IMR-90 (cell line): ENCODE measurements at regions of chr3 and their contacts with region 1.

Region 1: DNA sequence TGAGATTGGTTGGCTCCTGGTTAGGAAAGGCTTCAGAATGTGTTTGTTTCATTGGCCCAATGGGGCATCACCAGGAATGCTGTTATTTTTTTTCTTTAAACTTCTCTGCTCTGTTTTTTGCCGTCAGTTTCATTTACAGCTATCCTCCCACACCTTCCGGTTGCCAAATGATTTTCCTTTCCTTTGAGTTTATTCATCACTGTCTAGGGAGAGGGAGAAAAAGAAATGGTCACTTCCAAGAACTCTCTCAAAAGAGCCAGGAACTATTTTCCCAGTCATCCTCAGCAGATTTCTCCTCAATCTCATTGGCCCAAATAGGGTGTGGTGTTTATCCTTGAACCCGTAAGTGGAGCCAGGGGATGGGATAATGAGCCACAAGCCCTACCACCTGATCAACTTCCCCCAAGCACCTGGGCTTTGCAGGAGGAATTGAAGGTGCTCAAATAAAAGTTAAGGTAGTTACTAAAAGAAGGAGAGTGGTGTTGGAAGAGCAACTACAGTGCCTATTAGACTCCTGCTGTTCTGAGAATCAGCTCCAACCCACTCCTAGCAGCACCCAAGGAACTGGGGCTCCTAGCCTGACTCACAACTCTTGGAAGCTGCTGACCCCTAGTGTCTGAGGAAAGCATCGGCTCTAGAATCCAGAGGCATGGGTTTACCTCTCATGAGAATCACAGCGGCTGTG is 183.8 kb upstream of the IL12A start:
- DNase-seq: peak; percentile 92
- ATAC-seq: peak; percentile 93
- H3K4me3 ChIP-seq: no peak overlapping the region
- H3K27ac ChIP-seq: no peak overlapping the region
- H3K4me1 ChIP-seq: peaks cover 22% of the 10 kb centered on the region
- H3K27me3 ChIP-seq: no peaks in the 10 kb centered on the region
- CTCF ChIP-seq: peak; percentile 95
- POLR2A ChIP-seq: no peak
- RAD21 ChIP-seq: peak; percentile 98

Region 2: DNA sequence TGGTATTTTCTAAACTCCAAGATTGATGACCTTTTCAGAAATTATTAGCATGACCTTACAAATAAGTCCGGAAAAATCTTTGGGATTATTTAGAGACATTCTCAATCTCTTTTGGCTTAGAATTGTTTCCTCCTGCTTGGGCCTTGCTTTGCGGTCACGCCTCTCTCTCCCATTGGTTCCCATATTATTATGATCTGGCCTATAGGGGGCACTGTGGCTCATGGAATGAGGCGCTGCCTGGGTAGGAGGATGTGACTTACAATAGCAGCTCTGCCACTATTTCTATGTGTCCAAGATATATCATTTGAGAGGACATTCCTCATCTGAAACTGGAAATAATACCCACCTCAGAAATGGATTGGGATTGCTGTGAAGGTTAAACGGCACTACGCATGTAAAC is 538.1 kb before region 1 on chr3:
- CTCF ChIA-PET with region 1: interaction called, 4 read pairs
- POLR2A ChIA-PET with region 1: no interaction called
- dilution Hi-C with region 1: no loop called
- in situ Hi-C with region 1: loop called (anchors 5 kb)
- intact Hi-C with region 1: loop called (anchors 1 kb)
- DNase-seq: peak; percentile 6
- ATAC-seq: no peak
- H3K4me3 ChIP-seq: no peak overlapping the region
- H3K27ac ChIP-seq: no peak overlapping the region
- H3K4me1 ChIP-seq: no peaks in the 10 kb centered on the region
- H3K27me3 ChIP-seq: peaks cover 5% of the 10 kb centered on the region; the same call in 1 of the 2 replicates
- CTCF ChIP-seq: peak; percentile 43
- POLR2A ChIP-seq: no peak
- RAD21 ChIP-seq: peak; percentile 56

Region 3: DNA sequence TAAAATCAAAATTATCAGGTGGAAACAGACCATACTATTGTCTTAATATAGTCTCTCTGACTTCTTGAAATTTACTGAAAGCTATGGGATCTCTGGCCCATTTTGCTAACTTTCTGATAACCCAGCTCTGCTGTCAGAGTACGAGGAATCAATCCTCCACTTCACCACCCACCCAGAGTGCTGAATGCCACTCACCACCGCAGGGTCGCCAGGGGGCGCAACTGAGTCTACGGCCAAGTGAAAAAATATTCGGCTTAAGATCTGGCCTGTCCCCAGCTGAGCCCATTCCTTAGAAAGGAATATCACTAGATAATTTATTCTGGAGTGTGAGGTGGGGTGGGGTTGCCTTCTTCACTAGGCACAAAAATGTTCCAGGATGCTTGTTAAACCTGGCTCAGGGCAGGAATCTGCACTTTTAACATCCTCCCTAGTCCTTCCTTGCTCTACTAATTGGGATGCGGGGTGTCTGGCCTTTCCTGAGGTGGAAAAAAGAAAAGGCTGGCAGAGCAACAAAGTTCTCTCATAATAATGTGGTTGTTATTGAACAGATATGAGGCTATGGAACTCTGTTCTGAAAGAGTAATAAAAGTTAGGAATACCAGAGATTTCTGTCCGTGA is 482.4 kb before region 1 on chr3:
- CTCF ChIA-PET with region 1: interaction called, 8 read pairs
- POLR2A ChIA-PET with region 1: no interaction called
- dilution Hi-C with region 1: no loop called
- in situ Hi-C with region 1: loop called (anchors 10 kb)
- intact Hi-C with region 1: no loop called
- DNase-seq: peak; percentile 20
- ATAC-seq: peak; percentile 77
- H3K4me3 ChIP-seq: no peak overlapping the region
- H3K27ac ChIP-seq: no peak overlapping the region
- H3K4me1 ChIP-seq: no peaks in the 10 kb centered on the region
- H3K27me3 ChIP-seq: no peaks in the 10 kb centered on the region
- CTCF ChIP-seq: peak; percentile 72
- POLR2A ChIP-seq: no peak
- RAD21 ChIP-seq: peak; percentile 59

Region 4: DNA sequence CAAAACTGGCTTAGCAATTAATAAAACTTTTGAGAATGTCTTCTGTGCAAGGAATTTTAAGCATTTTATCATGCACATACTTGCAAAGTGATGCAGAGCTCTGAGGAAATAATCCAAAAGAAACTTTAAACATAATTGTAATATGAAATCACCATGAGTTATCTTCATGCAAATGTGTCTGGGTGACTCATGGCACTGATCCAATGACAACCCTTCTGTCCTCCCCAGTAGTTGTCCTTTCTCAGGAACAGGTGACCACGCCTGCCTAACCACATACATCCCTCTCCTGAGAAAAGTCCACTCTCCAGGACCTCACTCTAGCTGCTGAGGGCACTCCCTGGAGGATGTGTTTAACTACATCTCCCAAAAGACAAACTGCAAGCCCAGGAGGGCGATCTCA is 346.9 kb before region 1 on chr3:
- CTCF ChIA-PET with region 1: no interaction called
- POLR2A ChIA-PET with region 1: no interaction called
- dilution Hi-C with region 1: no loop called
- in situ Hi-C with region 1: no loop called
- intact Hi-C with region 1: loop called (anchors 10 kb)
- DNase-seq: peak; percentile 97
- ATAC-seq: peak; percentile 87
- H3K4me3 ChIP-seq: no peak overlapping the region
- H3K27ac ChIP-seq: 0 out of 2 replicates have a peak overlapping the region, but pooled peaks have one; percentile 3
- H3K4me1 ChIP-seq: peaks cover 5% of the 10 kb centered on the region
- H3K27me3 ChIP-seq: no peaks in the 10 kb centered on the region
- CTCF ChIP-seq: no peak
- POLR2A ChIP-seq: no peak
- RAD21 ChIP-seq: no peak

Region 5: GRCh38 chr3:159586571-159587202 is 218.2 kb before region 1 on chr3:
- CTCF ChIA-PET with region 1: no interaction called
- POLR2A ChIA-PET with region 1: no interaction called
- dilution Hi-C with region 1: no loop called
- in situ Hi-C with region 1: no loop called
- intact Hi-C with region 1: loop called (anchors 1 kb)
- DNase-seq: peak; percentile 63
- ATAC-seq: peak; percentile 91
- H3K4me3 ChIP-seq: no peak overlapping the region
- H3K27ac ChIP-seq: no peak overlapping the region
- H3K4me1 ChIP-seq: peaks cover 2% of the 10 kb centered on the region; the same call in 1 of the 2 replicates
- H3K27me3 ChIP-seq: peaks cover 4% of the 10 kb centered on the region
- CTCF ChIP-seq: peak; percentile 63
- POLR2A ChIP-seq: no peak
- RAD21 ChIP-seq: peak; percentile 75

Region 6: GRCh38 chr3:159616212-159616825 is 188.5 kb before region 1 on chr3:
- CTCF ChIA-PET with region 1: interaction called, 6 read pairs
- POLR2A ChIA-PET with region 1: no interaction called
- dilution Hi-C with region 1: no loop called
- in situ Hi-C with region 1: loop called (anchors 5 kb)
- intact Hi-C with region 1: loop called (anchors 1 kb)
- DNase-seq: peak; percentile 68
- ATAC-seq: peak; percentile 70
- H3K4me3 ChIP-seq: no peak overlapping the region
- H3K27ac ChIP-seq: no peak overlapping the region
- H3K4me1 ChIP-seq: peaks cover 14% of the 10 kb centered on the region
- H3K27me3 ChIP-seq: no peaks in the 10 kb centered on the region
- CTCF ChIP-seq: peak; percentile 67
- POLR2A ChIP-seq: no peak
- RAD21 ChIP-seq: peak; percentile 82

Region 7: DNA sequence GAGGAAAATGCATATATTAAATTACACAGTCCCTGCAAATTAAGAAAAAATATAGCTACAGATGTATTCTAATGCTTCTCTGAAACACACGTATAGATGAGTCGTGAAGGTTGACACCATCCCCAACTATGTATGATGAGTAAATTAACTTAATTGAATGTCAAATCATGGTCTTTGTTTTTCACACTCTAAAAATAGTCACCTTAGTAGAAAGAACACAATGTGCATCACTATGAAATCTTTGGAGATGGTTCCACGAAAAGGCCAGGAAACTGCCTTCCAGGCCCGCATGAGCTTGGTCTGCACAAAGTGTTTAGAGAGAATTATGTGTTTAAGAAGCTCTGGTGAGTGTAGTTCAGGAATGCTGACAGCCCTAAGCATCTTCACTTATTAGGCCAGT is 129.6 kb before region 1 on chr3:
- CTCF ChIA-PET with region 1: no interaction called
- POLR2A ChIA-PET with region 1: no interaction called
- dilution Hi-C with region 1: no loop called
- in situ Hi-C with region 1: no loop called
- intact Hi-C with region 1: no loop called
- DNase-seq: no peak
- ATAC-seq: no peak
- H3K4me3 ChIP-seq: no peak overlapping the region
- H3K27ac ChIP-seq: no peak overlapping the region
- H3K4me1 ChIP-seq: no peaks in the 10 kb centered on the region
- H3K27me3 ChIP-seq: no peaks in the 10 kb centered on the region
- CTCF ChIP-seq: no peak
- POLR2A ChIP-seq: no peak
- RAD21 ChIP-seq: no peak

Region 8: GRCh38 chr3:159732172-159733111 is 72.4 kb before region 1 on chr3:
- CTCF ChIA-PET with region 1: interaction called, 6 read pairs
- POLR2A ChIA-PET with region 1: no interaction called
- dilution Hi-C with region 1: no loop called
- in situ Hi-C with region 1: no loop called
- intact Hi-C with region 1: loop called (anchors 2 kb)
- DNase-seq: peak; percentile 86
- ATAC-seq: peak; percentile 82
- H3K4me3 ChIP-seq: peak overlapping the region; percentile 41; the same call in 1 of the 2 replicates
- H3K27ac ChIP-seq: peak overlapping the region; percentile 82
- H3K4me1 ChIP-seq: peaks cover 15% of the 10 kb centered on the region
- H3K27me3 ChIP-seq: no peaks in the 10 kb centered on the region
- CTCF ChIP-seq: no peak
- POLR2A ChIP-seq: no peak; the same call in 1 of the 2 replicates
- RAD21 ChIP-seq: peak; percentile 13; the same call in 1 of the 2 replicates